ENCODE measurements at regions of chr12 and their contacts with region 1.

Region 1: DNA sequence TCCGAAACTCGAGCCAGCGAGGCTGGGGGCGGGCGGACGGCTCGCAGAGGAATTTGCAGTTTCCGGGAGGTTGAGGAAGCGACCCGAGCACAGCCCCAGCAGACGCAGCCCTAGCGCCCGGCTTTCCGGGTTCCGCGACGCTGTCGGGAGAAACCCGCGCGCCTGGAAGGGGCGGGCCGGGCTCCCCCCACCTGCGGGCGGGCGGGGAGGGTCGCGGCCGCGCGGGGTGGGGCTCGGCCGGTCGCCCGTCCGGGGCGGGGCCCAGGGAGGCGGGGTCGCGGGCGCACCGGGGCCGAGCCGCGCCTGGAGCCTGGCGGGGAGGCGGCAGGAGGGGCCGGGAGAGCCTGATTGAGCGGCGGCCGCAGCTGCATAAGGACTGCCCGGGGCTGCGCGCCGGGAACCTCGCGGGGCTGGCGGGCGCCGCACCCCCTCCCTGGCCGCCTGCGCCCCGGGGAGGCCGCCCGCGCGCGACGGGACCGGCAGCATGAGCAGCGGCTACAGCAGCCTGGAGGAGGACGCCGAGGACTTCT is at the start of gene RASSF3:
- DNase-seq: peak; percentile 91
- H3K4me3 ChIP-seq: peak within 1 kb of the TSS; percentile 93
- H3K27ac ChIP-seq: peak within 1 kb of the TSS; percentile 81
- H3K4me1 ChIP-seq: peaks cover 40% of the 10 kb centered on the region
- CTCF ChIP-seq: no peak
- total RNA-seq, gene RASSF3: 13.8 and 16.3 TPM in 2 replicates

Region 2: GRCh38 chr12:64403707-64404469 is 206.3 kb before region 1 on chr12 and contains the start of gene XPOT:
- CTCF ChIA-PET with region 1: no interaction called
- POLR2A ChIA-PET with region 1: interaction called, 3 read pairs
- intact Hi-C with region 1: loop called (anchors 2 kb)
- DNase-seq: peak; percentile 97
- H3K4me3 ChIP-seq: peak within 1 kb of the TSS; percentile 98
- H3K27ac ChIP-seq: peak within 1 kb of the TSS; percentile 89
- H3K4me1 ChIP-seq: peaks cover 21% of the 10 kb centered on the region
- CTCF ChIP-seq: no peak
- total RNA-seq, gene XPOT: 86.8 and 101 TPM in 2 replicates

Region 3: DNA sequence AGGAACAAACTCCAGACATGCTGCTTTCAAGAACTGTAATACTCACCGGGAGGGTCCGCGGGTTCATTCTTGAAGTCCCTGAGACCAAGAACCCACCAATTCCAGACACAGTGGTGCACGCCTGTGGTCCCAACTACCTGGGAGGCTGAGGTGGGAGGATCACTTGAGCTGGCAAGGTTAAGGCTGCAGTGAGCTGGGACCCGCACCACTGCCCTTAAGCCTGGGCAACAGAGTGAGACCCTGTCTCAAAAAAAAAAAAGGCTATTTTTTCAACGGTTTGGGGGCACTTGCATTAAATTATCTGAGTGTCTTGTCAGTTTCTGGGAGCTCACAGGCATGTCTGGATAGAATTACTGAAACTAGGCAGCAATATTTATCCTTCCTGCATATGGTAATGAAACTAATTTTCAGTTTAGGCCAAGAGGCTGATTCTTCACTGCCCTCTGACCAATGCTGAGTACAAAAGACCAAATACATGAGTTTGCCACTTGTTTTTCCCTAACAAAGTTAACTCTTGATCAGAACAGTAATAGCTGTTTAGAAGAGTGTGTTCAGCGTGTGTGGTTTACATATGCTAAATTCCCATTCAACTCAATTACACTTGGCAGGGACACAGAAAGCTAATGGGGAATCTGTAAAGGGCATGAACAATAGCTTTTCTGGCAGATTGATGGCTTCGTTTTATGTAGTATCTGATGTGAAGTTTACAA is 65.7 kb before region 1 on chr12:
- CTCF ChIA-PET with region 1: no interaction called
- POLR2A ChIA-PET with region 1: interaction called, 3 read pairs
- intact Hi-C with region 1: loop called (anchors 5 kb)
- DNase-seq: no peak
- H3K4me3 ChIP-seq: no peak overlapping the region
- H3K27ac ChIP-seq: no peak overlapping the region
- H3K4me1 ChIP-seq: no peaks in the 10 kb centered on the region
- CTCF ChIP-seq: no peak

Region 4: GRCh38 chr12:64669270-64669842 is 59.1 kb after region 1 on chr12:
- CTCF ChIA-PET with region 1: no interaction called
- POLR2A ChIA-PET with region 1: interaction called, 13 read pairs
- intact Hi-C with region 1: loop called (anchors 1 kb)
- DNase-seq: peak; percentile 77
- H3K4me3 ChIP-seq: peak overlapping the region; percentile 60
- H3K27ac ChIP-seq: peak overlapping the region; percentile 82
- H3K4me1 ChIP-seq: peaks cover 90% of the 10 kb centered on the region
- CTCF ChIP-seq: no peak

Region 5: GRCh38 chr12:64696080-64696741 is 86.0 kb after region 1 on chr12:
- CTCF ChIA-PET with region 1: interaction called, 3 read pairs
- POLR2A ChIA-PET with region 1: interaction called, 3 read pairs
- intact Hi-C with region 1: loop called (anchors 2 kb)
- DNase-seq: peak; percentile 13
- H3K4me3 ChIP-seq: no peak overlapping the region
- H3K27ac ChIP-seq: no peak overlapping the region
- H3K4me1 ChIP-seq: peaks cover 6% of the 10 kb centered on the region
- CTCF ChIP-seq: peak; percentile 62

Region 6: GRCh38 chr12:64759035-64759901 is 149.1 kb after region 1 on chr12 and contains the start of gene GNS:
- CTCF ChIA-PET with region 1: no interaction called
- POLR2A ChIA-PET with region 1: interaction called, 3 read pairs
- intact Hi-C with region 1: loop called (anchors 2 kb)
- DNase-seq: peak; percentile 92
- H3K4me3 ChIP-seq: peak within 1 kb of the TSS; percentile 87
- H3K27ac ChIP-seq: peak within 1 kb of the TSS; percentile 45
- H3K4me1 ChIP-seq: peaks cover 18% of the 10 kb centered on the region
- CTCF ChIP-seq: no peak
- total RNA-seq, gene GNS: 8.0 and 9.4 TPM in 2 replicates

Measured in OCI-LY7 (cell line).